ENCODE measurements at regions of chr11 and their contacts with region 1.

Region 1: GRCh38 chr11:3854977-3855807 is at the start of gene STIM1:
- DNase-seq: peak; percentile 96 to 98 (median 97)
- H3K4me3 ChIP-seq: peak within 1 kb of the TSS; percentile 91 to 92
- H3K4me3 Mint-ChIP-seq: peak within 1 kb of the TSS; percentile 90 to 97 (median 94)
- H3K27ac ChIP-seq: peak within 1 kb of the TSS; percentile 94
- H3K27ac Mint-ChIP-seq: peak within 1 kb of the TSS; percentile 99 to 100 (median 99)
- H3K4me1 ChIP-seq: peaks cover 64% of the 10 kb centered on the region
- H3K4me1 Mint-ChIP-seq: peaks cover 49 to 71% (median 61%) of the 10 kb centered on the region in 4 donors
- H3K27me3 ChIP-seq: no peaks in the 10 kb centered on the region
- H3K27me3 Mint-ChIP-seq: no peaks in the 10 kb centered on the region
- total RNA-seq, gene STIM1: 87.1 to 87.4 TPM

Region 2: GRCh38 chr11:3642071-3642951 is 212.9 kb before region 1 on chr11:
- CTCF ChIA-PET with region 1: no interaction called
- POLR2A ChIA-PET with region 1: no interaction called
- intact Hi-C with region 1: no loop called
- DNase-seq: peak; percentile 52 to 83 (median 70)
- H3K4me3 ChIP-seq: peak overlapping the region in 1 of 2 donors; percentile 51
- H3K4me3 Mint-ChIP-seq: peak overlapping the region; percentile 60 to 91 (median 80)
- H3K27ac ChIP-seq: no peak overlapping the region
- H3K27ac Mint-ChIP-seq: peak overlapping the region in 3 of 7 donors; percentile 29 to 82 (median 37)
- H3K4me1 ChIP-seq: peaks cover 10% of the 10 kb centered on the region
- H3K4me1 Mint-ChIP-seq: peaks cover 3 to 13% (median 9%) of the 10 kb centered on the region in 4 donors
- H3K27me3 ChIP-seq: peaks cover 5% of the 10 kb centered on the region
- H3K27me3 Mint-ChIP-seq: peaks cover 11 to 18% of the 10 kb centered on the region in 2 donors

Region 3: GRCh38 chr11:3824714-3825472 is 30.3 kb before region 1 on chr11:
- CTCF ChIA-PET with region 1: interaction called, 514 read pairs
- POLR2A ChIA-PET with region 1: interaction called, 15 read pairs
- intact Hi-C with region 1: no loop called
- DNase-seq: peak; percentile 75 to 85 (median 78)
- H3K4me3 ChIP-seq: no peak overlapping the region
- H3K4me3 Mint-ChIP-seq: peak overlapping the region in 4 of 8 donors; percentile 13 to 50 (median 34)
- H3K27ac ChIP-seq: peak overlapping the region; percentile 22
- H3K27ac Mint-ChIP-seq: peak overlapping the region; percentile 79 to 94 (median 89)
- H3K4me1 ChIP-seq: peaks cover 20% of the 10 kb centered on the region
- H3K4me1 Mint-ChIP-seq: peaks cover 20 to 47% (median 32%) of the 10 kb centered on the region in 4 donors
- H3K27me3 ChIP-seq: no peaks in the 10 kb centered on the region
- H3K27me3 Mint-ChIP-seq: no peaks in the 10 kb centered on the region

Region 4: DNA sequence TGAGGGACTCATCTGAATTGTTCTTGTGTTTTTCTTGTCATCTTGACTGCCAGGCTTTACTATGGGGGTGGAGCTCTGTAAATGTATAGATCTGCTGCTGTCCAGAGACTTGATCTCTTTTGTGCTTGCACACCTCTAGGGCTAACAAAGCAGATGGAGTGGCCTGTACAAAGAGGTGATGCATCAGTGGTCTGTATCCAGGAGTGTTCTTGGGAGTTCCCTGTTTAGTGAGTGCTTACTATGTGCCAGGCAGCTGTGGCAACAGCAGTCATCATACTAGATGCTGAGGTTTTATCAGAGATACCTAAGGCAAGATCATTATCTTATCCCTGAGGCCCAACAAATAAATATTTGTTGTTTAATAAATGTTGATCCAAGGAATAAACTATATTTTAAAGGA is 33.7 kb after region 1 on chr11:
- CTCF ChIA-PET with region 1: interaction called, 368 read pairs
- POLR2A ChIA-PET with region 1: interaction called, 14 read pairs
- intact Hi-C with region 1: no loop called
- DNase-seq: no peak
- H3K4me3 ChIP-seq: no peak overlapping the region
- H3K4me3 Mint-ChIP-seq: peak overlapping the region in 1 of 8 donors; percentile 46
- H3K27ac ChIP-seq: no peak overlapping the region
- H3K27ac Mint-ChIP-seq: peak overlapping the region in 3 of 7 donors; percentile 51 to 87 (median 80)
- H3K4me1 ChIP-seq: peaks cover 62% of the 10 kb centered on the region
- H3K4me1 Mint-ChIP-seq: peaks cover 52 to 80% (median 63%) of the 10 kb centered on the region in 4 donors
- H3K27me3 ChIP-seq: no peaks in the 10 kb centered on the region
- H3K27me3 Mint-ChIP-seq: no peaks in the 10 kb centered on the region

Region 5: DNA sequence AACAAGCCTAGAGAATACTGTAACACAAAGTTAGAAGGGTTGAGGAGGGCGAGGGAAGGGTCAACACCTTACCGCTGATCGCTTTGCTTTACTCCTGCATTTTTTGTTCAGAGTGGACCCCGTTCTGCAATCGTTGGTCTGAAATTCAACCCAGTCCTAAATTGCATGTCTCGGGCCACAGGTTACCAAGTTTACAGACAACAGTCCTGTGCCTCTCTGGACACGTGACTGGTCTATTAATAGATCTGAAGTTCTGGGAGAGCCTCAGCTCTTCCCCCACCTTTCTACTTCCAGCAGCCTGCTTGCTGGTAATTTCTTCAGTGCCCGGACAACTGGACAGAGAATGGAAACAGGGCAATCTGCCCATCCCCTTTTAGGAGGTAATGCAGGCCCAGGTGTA is 74.5 kb after region 1 on chr11:
- CTCF ChIA-PET with region 1: interaction called, 24 read pairs
- POLR2A ChIA-PET with region 1: interaction called, 9 read pairs
- intact Hi-C with region 1: loop called (anchors 5 kb)
- DNase-seq: no peak
- H3K4me3 ChIP-seq: no peak overlapping the region
- H3K4me3 Mint-ChIP-seq: no peak overlapping the region
- H3K27ac ChIP-seq: no peak overlapping the region
- H3K27ac Mint-ChIP-seq: peak overlapping the region in 2 of 7 donors; percentile 37 to 69
- H3K4me1 ChIP-seq: peaks cover 39% of the 10 kb centered on the region
- H3K4me1 Mint-ChIP-seq: peaks cover 41 to 70% (median 48%) of the 10 kb centered on the region in 4 donors
- H3K27me3 ChIP-seq: no peaks in the 10 kb centered on the region
- H3K27me3 Mint-ChIP-seq: no peaks in the 10 kb centered on the region

Region 6: GRCh38 chr11:3969613-3970012 is 114.4 kb after region 1 on chr11:
- CTCF ChIA-PET with region 1: interaction called, 24 read pairs
- POLR2A ChIA-PET with region 1: interaction called, 8 read pairs
- intact Hi-C with region 1: no loop called
- DNase-seq: peak in 2 of 5 donors; percentile 13 to 22
- H3K4me3 ChIP-seq: no peak overlapping the region
- H3K4me3 Mint-ChIP-seq: peak overlapping the region; percentile 1 to 80 (median 36)
- H3K27ac ChIP-seq: no peak overlapping the region
- H3K27ac Mint-ChIP-seq: peak overlapping the region; percentile 0 to 90 (median 57)
- H3K4me1 ChIP-seq: peaks cover 47% of the 10 kb centered on the region
- H3K4me1 Mint-ChIP-seq: peaks cover 54 to 82% (median 69%) of the 10 kb centered on the region in 4 donors
- H3K27me3 ChIP-seq: no peaks in the 10 kb centered on the region
- H3K27me3 Mint-ChIP-seq: no peaks in the 10 kb centered on the region

Region 7: DNA sequence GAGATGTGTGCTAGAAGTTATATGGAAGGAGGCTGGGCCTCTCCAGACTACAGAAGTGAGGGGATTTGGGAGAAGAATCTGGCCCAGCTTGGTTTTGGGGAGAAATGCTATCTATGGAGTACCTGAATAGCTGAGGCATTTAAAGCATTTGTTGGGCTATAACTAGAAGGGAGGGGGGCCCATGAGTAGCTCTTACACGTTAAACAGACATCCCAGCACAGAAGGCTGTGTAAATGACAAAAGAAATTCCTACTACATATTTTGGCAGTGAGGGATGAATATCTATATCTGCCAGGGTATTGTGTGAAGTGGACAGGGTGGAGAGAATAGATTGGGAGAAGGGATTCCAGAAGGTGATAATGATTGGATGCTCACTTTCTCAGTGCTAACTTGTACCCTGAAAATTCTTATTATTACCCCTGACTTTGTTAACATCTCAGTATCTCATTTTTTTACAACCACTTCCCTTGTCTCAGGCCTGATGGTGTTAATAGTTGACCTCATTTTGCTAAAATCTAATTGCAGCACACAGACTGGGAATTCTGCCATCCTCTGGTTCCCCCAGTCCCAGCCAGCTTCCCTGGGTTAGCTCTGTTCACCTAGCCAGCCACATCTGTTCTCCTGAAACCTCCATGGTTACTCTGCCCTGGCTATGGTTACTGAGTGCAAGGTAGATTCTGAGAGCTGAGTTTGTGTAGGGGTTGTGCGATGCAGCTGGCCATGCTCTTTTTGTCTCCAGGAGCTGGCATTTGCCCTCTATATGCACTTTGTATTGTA is 210.6 kb after region 1 on chr11:
- CTCF ChIA-PET with region 1: interaction called, 934 read pairs
- POLR2A ChIA-PET with region 1: interaction called, 89 read pairs
- intact Hi-C with region 1: no loop called
- DNase-seq: no peak
- H3K4me3 ChIP-seq: no peak overlapping the region
- H3K4me3 Mint-ChIP-seq: peak overlapping the region in 3 of 8 donors; percentile 14 to 61 (median 48)
- H3K27ac ChIP-seq: no peak overlapping the region
- H3K27ac Mint-ChIP-seq: peak overlapping the region; percentile 60 to 93 (median 80)
- H3K4me1 ChIP-seq: peaks cover 65% of the 10 kb centered on the region
- H3K4me1 Mint-ChIP-seq: peaks cover 63 to 75% (median 67%) of the 10 kb centered on the region in 4 donors
- H3K27me3 ChIP-seq: no peaks in the 10 kb centered on the region
- H3K27me3 Mint-ChIP-seq: no peaks in the 10 kb centered on the region